ENCODE measurements at regions of chr10 and their contacts with region 1.

Region 1: GRCh38 chr10:100481462-100482081 is 18.8 kb downstream of the WNT8B start:
- DNase-seq: peak; percentile 89
- H3K4me3 Mint-ChIP-seq: no peak overlapping the region
- H3K27ac Mint-ChIP-seq: no peak overlapping the region
- H3K4me1 Mint-ChIP-seq: peaks cover 5% of the 10 kb centered on the region
- H3K27me3 Mint-ChIP-seq: peaks cover 37% of the 10 kb centered on the region
- CTCF ChIP-seq: no peak

Region 2: GRCh38 chr10:99926925-99927720 is 554.4 kb before region 1 on chr10:
- CTCF ChIA-PET with region 1: no interaction called
- POLR2A ChIA-PET with region 1: no interaction called
- intact Hi-C with region 1: no loop called
- DNase-seq: peak; percentile 73
- H3K4me3 Mint-ChIP-seq: peak overlapping the region; percentile 42
- H3K27ac Mint-ChIP-seq: peak overlapping the region; percentile 44
- H3K4me1 Mint-ChIP-seq: peaks cover 50% of the 10 kb centered on the region
- H3K27me3 Mint-ChIP-seq: no peaks in the 10 kb centered on the region
- CTCF ChIP-seq: no peak

Region 3: GRCh38 chr10:100501423-100501822 is 19.9 kb after region 1 on chr10:
- CTCF ChIA-PET with region 1: interaction called, 18 read pairs
- POLR2A ChIA-PET with region 1: no interaction called
- intact Hi-C with region 1: no loop called
- DNase-seq: no peak
- H3K4me3 Mint-ChIP-seq: no peak overlapping the region
- H3K27ac Mint-ChIP-seq: no peak overlapping the region
- H3K4me1 Mint-ChIP-seq: no peaks in the 10 kb centered on the region
- H3K27me3 Mint-ChIP-seq: no peaks in the 10 kb centered on the region
- CTCF ChIP-seq: no peak

Measured in MCF 10A (cell line).